Naive thymus-derived CD4-positive, alpha-beta T cell (primary cell): ENCODE measurements at regions of chr6 and their contacts with region 1.

Region 1: DNA sequence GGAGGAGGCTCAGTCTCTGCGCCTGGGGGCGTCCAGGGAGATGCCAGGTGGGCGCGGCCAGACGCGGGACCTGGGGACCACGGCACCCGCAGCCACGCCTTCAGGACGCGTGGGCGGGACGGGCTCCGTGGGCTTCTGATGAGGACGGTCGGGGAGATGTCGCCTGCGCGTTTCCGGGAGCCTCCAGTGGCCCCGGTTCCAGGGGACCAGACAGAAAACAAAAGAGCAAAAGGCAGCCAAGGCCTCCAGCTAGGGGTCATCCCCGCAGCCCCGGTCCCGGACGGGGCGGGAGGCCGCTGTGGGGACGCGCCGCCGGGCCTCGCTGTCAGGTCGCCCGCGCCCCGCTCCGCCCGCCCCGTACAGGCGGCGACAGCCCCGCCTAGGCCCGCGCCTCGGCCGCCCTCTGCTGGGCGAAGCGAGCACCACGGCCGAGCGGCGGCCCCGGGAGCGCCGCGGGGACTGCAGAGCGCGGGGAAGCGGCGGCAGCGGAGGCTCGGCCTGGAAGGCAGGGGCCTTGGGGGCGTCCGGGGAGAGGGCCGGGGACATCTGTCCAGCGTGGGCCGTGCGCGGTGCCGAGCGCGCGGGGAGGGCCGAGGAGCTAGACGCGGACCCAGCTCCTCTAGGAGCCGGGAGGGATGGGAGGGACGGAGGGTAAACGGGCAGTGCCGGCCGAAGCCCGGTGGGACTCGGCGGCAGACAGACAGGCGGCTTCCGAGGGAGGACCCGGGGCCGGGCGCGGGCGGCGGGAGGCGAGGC is 48.7 kb downstream of the TMEM242 start:
- DNase-seq: peak; percentile 72 to 94 (median 88)
- ATAC-seq: peak; percentile 95
- H3K4me3 ChIP-seq: peak overlapping the region; percentile 80
- H3K4me3 Mint-ChIP-seq: peak overlapping the region; percentile 83 to 96 (median 92)
- H3K27ac ChIP-seq: peak overlapping the region; percentile 93
- H3K27ac Mint-ChIP-seq: peak overlapping the region; percentile 89 to 98 (median 92)
- H3K4me1 ChIP-seq: peaks cover 6 to 7% of the 10 kb centered on the region in 2 donors
- H3K4me1 Mint-ChIP-seq: peaks cover 0 to 10% (median 8%) of the 10 kb centered on the region in 7 donors
- H3K27me3 ChIP-seq: no peaks in the 10 kb centered on the region
- H3K27me3 Mint-ChIP-seq: peaks cover 0 to 15% (median 0%) of the 10 kb centered on the region in 5 donors

Region 2: DNA sequence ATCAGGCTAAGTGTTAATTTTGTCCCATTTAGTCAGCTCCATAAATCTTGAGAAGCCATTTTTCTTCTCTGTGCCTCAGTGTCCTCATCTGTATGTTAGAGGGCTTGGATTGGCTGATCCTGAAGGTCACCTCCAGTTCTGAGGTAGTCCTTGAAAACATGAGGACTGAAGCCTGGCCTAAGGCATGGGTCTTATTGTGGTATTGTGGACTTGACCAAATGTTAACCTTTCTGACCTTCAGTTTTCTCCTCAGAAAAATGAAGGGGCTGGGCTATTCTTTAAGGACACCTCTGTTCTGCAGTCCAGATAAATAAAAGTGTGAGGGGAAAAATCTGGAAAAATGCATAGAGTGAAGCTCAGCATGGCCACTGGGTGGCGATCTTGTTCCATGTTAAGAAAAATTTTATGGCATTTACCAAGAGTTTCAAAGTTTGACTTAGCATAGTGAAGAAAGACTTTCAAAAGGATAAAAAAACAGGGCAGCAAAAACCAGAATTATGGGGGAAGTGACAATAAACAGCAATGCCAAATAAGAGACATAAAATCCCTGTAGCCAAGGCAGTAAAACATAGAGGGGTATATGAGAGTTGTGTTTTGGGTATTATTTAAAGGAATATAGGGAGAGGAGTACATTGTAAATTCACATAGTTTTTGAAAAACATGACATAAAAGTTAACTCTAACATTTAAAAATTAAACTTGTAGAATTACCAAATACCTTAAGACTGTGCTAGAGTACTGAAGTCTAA is 1947.1 kb before region 1 on chr6:
- CTCF ChIA-PET with region 1: no interaction called
- POLR2A ChIA-PET with region 1: no interaction called
- intact Hi-C with region 1: loop called (anchors 2 to 5 kb)
- DNase-seq: peak; percentile 34 to 76 (median 66)
- ATAC-seq: peak; percentile 80
- H3K4me3 ChIP-seq: no peak overlapping the region
- H3K4me3 Mint-ChIP-seq: peak overlapping the region in 6 of 10 donors; percentile 0 to 40 (median 16)
- H3K27ac ChIP-seq: no peak overlapping the region
- H3K27ac Mint-ChIP-seq: peak overlapping the region; percentile 1 to 68 (median 15)
- H3K4me1 ChIP-seq: peaks cover 0 to 16% of the 10 kb centered on the region in 2 donors
- H3K4me1 Mint-ChIP-seq: peaks cover 3 to 21% (median 19%) of the 10 kb centered on the region in 7 donors
- H3K27me3 ChIP-seq: no peaks in the 10 kb centered on the region
- H3K27me3 Mint-ChIP-seq: no peaks in the 10 kb centered on the region

Region 3: DNA sequence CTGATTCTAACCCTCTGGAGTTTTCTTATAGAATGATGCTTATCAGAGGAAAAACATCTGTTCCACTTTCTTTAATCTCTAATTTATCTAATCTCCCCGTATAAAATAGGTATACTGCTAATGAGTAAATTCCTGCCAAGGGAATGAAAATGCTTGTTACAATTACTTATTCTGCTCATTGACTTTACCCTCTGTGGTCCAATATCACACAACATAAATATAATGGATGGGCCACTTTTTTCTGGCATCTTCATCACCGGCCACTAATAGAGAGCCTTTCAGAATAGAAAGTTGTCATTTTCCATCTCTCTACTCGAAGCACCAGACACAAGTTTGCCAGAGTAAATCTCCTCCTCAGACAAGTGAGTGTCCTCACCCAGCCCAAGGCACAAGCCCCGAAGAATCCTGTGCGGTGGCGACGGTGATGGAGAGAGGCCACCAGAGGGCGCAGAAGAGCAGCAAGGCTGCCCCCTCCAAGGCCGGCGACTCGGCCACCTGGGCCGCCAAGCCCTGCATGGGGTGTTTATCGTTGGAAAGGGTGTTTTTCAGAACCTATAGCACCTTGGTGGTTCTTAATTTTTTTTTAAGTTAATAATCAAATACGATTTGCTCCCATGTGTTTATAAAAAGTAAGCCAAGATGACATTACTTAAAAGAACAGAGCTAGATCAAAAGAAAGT is 710.4 kb before region 1 on chr6:
- CTCF ChIA-PET with region 1: interaction called, 3 read pairs
- POLR2A ChIA-PET with region 1: no interaction called
- intact Hi-C with region 1: loop called (anchors 1 to 2 kb)
- DNase-seq: peak; percentile 54 to 76 (median 65)
- ATAC-seq: peak; percentile 95
- H3K4me3 ChIP-seq: no peak overlapping the region
- H3K4me3 Mint-ChIP-seq: peak overlapping the region in 1 of 10 donors; percentile 34
- H3K27ac ChIP-seq: no peak overlapping the region
- H3K27ac Mint-ChIP-seq: peak overlapping the region in 4 of 9 donors; percentile 21 to 49 (median 32)
- H3K4me1 ChIP-seq: peaks cover 0 to 3% of the 10 kb centered on the region in 2 donors
- H3K4me1 Mint-ChIP-seq: peaks cover 5 to 13% (median 7%) of the 10 kb centered on the region in 7 donors
- H3K27me3 ChIP-seq: no peaks in the 10 kb centered on the region
- H3K27me3 Mint-ChIP-seq: peaks cover 0 to 11% (median 8%) of the 10 kb centered on the region in 5 donors

Region 4: DNA sequence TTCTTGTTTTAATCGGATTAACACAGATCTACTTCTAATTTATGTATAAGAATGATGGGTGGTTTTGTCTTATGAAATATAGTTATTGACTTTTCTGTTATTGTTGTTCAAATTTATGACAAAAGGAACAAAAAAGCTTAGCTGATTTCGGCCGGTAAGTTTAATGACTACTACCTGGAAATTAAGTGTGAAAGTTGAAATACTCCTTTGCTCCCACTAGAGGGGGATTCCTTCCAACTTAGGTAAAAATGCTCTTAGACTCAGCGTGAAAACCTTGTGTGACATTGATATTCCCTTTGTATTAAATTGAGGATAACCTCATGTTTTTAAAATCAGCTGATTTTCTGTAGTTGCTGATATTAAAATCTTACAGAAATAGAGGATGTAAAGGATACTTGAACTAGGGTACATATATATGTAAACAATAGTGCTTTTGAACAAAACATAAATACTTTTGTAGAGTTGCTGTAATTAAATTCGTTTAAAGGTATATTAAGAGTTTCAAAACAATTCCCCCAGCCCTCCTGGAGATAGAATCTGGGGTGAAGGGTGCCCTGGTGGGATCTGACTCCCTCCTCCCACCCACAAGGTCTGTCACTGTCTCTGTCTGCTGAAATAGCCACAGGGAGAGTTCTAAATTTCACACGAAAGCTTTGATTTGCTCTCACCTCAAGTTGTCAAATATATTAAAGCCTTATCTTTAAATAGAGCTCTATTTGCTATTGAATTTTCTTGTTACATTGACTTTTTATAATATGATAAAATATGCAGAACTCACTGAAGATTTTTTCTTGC is 240.0 kb before region 1 on chr6:
- CTCF ChIA-PET with region 1: no interaction called
- POLR2A ChIA-PET with region 1: interaction called, 5 read pairs
- intact Hi-C with region 1: loop called (anchors 1 kb)
- DNase-seq: peak in 6 of 9 donors; percentile 43 to 57 (median 52)
- ATAC-seq: peak; percentile 85
- H3K4me3 ChIP-seq: no peak overlapping the region
- H3K4me3 Mint-ChIP-seq: peak overlapping the region; percentile 44 to 99 (median 84)
- H3K27ac ChIP-seq: peak overlapping the region; percentile 77
- H3K27ac Mint-ChIP-seq: peak overlapping the region; percentile 44 to 95 (median 84)
- H3K4me1 ChIP-seq: peaks cover 6 to 20% of the 10 kb centered on the region in 2 donors
- H3K4me1 Mint-ChIP-seq: peaks cover 22 to 38% (median 27%) of the 10 kb centered on the region in 7 donors
- H3K27me3 ChIP-seq: no peaks in the 10 kb centered on the region
- H3K27me3 Mint-ChIP-seq: no peaks in the 10 kb centered on the region

Region 5: DNA sequence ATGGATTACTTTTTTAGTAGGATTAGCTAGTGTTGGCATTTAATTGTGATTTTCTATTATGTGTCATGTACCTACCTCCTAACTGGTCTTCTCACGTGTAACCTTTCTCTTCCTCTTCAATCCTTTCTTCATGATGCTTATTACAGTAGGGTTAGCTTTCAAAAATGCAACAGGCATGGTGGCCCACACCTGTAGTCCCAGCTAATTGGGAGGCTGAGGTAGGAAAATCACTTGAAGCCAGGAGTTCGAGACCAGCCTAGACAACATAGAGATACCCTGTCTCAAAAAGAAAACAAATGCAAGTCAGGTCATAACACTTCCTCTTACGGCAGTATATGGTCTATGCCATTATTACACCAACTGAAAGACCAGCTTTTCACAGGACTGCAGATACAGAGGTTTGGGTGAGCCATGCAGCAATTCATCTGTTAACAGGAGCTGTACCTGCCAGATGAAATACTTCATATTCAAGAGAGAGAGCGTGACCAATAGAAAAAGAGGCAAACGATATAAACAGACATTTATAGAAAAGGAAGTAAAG is 146.3 kb before region 1 on chr6:
- CTCF ChIA-PET with region 1: no interaction called
- POLR2A ChIA-PET with region 1: no interaction called
- intact Hi-C with region 1: no loop called
- DNase-seq: no peak
- ATAC-seq: no peak
- H3K4me3 ChIP-seq: no peak overlapping the region
- H3K4me3 Mint-ChIP-seq: no peak overlapping the region
- H3K27ac ChIP-seq: no peak overlapping the region
- H3K27ac Mint-ChIP-seq: peak overlapping the region in 3 of 9 donors; percentile 31 to 86 (median 68)
- H3K4me1 ChIP-seq: no peaks in the 10 kb centered on the region
- H3K4me1 Mint-ChIP-seq: peaks cover 14 to 33% (median 23%) of the 10 kb centered on the region in 7 donors
- H3K27me3 ChIP-seq: no peaks in the 10 kb centered on the region
- H3K27me3 Mint-ChIP-seq: no peaks in the 10 kb centered on the region

Region 6: GRCh38 chr6:157221007-157221816 is 53.4 kb before region 1 on chr6:
- CTCF ChIA-PET with region 1: interaction called, 7 read pairs
- POLR2A ChIA-PET with region 1: interaction called, 18 read pairs
- intact Hi-C with region 1: loop called (anchors 1 kb)
- DNase-seq: peak; percentile 71 to 85 (median 82)
- ATAC-seq: peak; percentile 85
- H3K4me3 ChIP-seq: peak overlapping the region; percentile 65
- H3K4me3 Mint-ChIP-seq: peak overlapping the region; percentile 78 to 97 (median 86)
- H3K27ac ChIP-seq: peak overlapping the region; percentile 49
- H3K27ac Mint-ChIP-seq: peak overlapping the region; percentile 48 to 99 (median 85)
- H3K4me1 ChIP-seq: peaks cover 0 to 28% of the 10 kb centered on the region in 2 donors
- H3K4me1 Mint-ChIP-seq: peaks cover 31 to 55% (median 39%) of the 10 kb centered on the region in 7 donors
- H3K27me3 ChIP-seq: no peaks in the 10 kb centered on the region
- H3K27me3 Mint-ChIP-seq: peaks cover 0 to 8% (median 2%) of the 10 kb centered on the region in 5 donors

Region 7: GRCh38 chr6:157323255-157323965 is 48.8 kb after region 1 on chr6 and contains the start of gene TMEM242:
- CTCF ChIA-PET with region 1: no interaction called
- POLR2A ChIA-PET with region 1: interaction called, 5 read pairs
- intact Hi-C with region 1: loop called in 1 of 2 experiments (anchors 1 kb)
- DNase-seq: peak; percentile 68 to 93 (median 81)
- ATAC-seq: peak; percentile 98
- H3K4me3 ChIP-seq: peak within 1 kb of the TSS; percentile 95
- H3K4me3 Mint-ChIP-seq: peak within 1 kb of the TSS; percentile 93 to 99 (median 95)
- H3K27ac ChIP-seq: peak within 1 kb of the TSS; percentile 76
- H3K27ac Mint-ChIP-seq: peak within 1 kb of the TSS; percentile 78 to 93 (median 92)
- H3K4me1 ChIP-seq: peaks cover 8 to 12% of the 10 kb centered on the region in 2 donors
- H3K4me1 Mint-ChIP-seq: peaks cover 10 to 47% (median 24%) of the 10 kb centered on the region in 7 donors
- H3K27me3 ChIP-seq: no peaks in the 10 kb centered on the region
- H3K27me3 Mint-ChIP-seq: peaks cover 0 to 30% (median 10%) of the 10 kb centered on the region in 5 donors
- total RNA-seq, gene TMEM242: 11.6 to 15.6 (median 13.2) TPM